ENCODE measurements at regions of chr3 and their contacts with region 1.

Region 1: DNA sequence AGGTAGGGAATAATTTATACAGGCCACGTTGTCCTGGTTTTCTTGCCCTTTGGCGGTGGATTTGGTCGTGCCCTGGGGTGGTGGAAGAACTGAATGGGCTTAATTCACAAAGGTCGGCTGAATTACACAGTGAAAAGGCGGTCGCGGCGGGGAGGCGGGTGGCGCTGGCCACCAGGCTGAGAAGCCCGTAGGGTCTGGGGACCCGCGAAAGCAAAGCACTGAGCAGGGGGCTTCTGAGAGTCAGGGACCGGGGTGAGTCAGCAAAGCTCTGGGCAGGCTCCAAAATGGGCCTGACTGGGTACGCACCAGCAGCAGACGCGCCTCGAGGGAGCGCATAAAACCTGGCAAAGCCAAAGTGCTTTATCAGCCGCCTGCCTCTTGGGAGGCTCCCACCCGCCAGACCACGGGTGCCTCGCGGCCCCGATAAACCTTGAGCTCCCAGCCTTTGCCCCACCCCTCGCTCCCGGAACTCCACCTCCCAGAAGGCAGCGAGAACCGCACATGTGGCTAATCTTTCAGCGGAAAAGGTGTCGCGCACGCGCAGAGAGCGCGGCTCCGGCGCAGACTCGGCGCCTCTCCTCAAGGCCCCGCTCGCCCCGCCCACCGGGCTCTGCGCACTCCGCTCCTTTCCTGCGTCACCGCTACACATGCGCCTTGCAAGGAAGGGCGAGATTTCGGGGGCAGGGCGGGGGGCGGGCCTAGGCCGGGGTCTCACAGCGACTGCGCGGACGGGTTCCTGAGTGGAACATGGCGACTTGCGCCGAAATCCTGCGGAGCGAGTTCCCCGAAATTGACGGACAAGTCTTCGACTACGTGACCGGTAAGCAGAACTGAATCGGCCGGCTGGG is at the start of gene ABCF3:
- DNase-seq: peak; percentile 100
- ATAC-seq: peak; percentile 95
- H3K4me3 Mint-ChIP-seq: peak within 1 kb of the TSS; percentile 99
- H3K27ac Mint-ChIP-seq: peak within 1 kb of the TSS; percentile 93
- H3K4me1 Mint-ChIP-seq: peaks cover 32% of the 10 kb centered on the region
- H3K27me3 Mint-ChIP-seq: no peaks in the 10 kb centered on the region
- total RNA-seq, gene ABCF3: 58.2 to 66.2 TPM

Region 2: GRCh38 chr3:183829331-183829865 is 356.3 kb before region 1 on chr3:
- CTCF ChIA-PET with region 1: no interaction called
- POLR2A ChIA-PET with region 1: no interaction called
- intact Hi-C with region 1: no loop called
- DNase-seq: no peak
- ATAC-seq: no peak
- H3K4me3 Mint-ChIP-seq: no peak overlapping the region
- H3K27ac Mint-ChIP-seq: no peak overlapping the region
- H3K4me1 Mint-ChIP-seq: peaks cover 4% of the 10 kb centered on the region
- H3K27me3 Mint-ChIP-seq: no peaks in the 10 kb centered on the region

Region 3: DNA sequence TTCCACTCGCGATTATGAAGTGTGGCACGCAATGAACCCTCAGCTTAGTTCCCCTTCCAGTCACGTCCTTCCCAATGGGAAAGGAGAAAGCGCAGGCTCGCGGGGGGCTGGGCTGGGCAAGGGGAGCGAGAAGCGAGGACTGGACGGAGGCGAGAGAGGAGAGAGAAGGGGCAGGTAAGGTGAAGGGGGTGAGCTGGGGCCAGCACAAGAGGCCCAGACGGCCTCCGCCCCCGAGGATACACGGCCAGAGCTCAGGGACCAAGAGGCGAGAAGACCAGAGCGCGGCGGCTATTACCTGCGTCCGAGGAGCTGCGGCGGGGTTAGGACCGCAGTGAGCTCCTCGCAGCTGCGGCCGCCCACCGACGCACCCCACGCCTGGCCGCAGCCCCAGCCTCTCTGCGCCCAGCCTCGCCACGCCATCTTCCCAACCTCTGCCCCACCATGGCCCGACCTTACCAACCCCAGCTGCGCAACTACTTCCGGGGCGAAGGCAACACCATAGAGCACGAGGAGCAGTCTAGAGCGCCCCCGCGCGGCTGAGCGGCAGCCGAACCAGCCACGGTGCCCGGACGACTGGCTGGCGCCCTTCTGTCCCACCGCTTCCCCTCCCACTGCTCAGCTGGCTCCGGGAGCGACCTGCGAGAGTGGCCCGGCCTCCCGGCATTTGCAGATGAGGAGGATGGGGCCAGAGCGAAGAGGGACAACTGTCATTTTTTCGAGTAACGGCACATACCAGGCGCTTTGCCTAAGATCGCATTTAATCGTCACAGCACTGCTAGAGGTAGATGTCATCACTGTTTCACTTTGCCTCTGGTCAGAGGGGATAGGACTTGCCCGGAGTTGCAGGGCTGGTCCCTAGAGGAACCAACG is 301.0 kb before region 1 on chr3 and contains the start of gene PARL:
- CTCF ChIA-PET with region 1: no interaction called
- POLR2A ChIA-PET with region 1: no interaction called
- intact Hi-C with region 1: loop called in 1 of 2 experiments (anchors 1 kb)
- DNase-seq: peak; percentile 98
- ATAC-seq: peak; percentile 100
- H3K4me3 Mint-ChIP-seq: peak within 1 kb of the TSS; percentile 94
- H3K27ac Mint-ChIP-seq: peak within 1 kb of the TSS; percentile 94
- H3K4me1 Mint-ChIP-seq: peaks cover 32% of the 10 kb centered on the region
- H3K27me3 Mint-ChIP-seq: no peaks in the 10 kb centered on the region
- total RNA-seq, gene PARL: 55.9 to 91.9 TPM

Region 4: DNA sequence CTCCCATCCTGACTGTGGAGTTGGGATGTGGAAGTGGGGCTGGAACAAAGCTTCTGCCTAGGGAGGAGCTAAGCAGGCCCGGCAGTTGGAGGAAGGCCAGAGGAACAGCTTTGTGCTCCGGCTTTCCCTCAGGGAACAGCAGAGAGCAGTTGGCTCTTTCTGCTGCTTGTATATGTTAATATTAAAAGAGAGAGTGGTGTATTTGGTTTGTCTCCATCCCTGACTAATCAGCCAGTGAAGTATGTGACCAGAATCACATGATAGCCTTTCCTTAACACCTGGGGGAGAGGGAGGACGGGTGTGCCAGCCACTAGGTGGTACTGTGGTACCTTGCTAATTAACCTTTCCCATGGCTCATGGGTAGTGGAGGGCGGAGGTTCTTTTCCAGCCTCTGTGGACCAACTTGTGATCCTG is 40.6 kb before region 1 on chr3:
- CTCF ChIA-PET with region 1: interaction called, 4 read pairs
- POLR2A ChIA-PET with region 1: no interaction called
- intact Hi-C with region 1: loop called in 1 of 2 experiments (anchors 1 kb)
- DNase-seq: peak; percentile 59
- ATAC-seq: peak; percentile 81
- H3K4me3 Mint-ChIP-seq: no peak overlapping the region
- H3K27ac Mint-ChIP-seq: no peak overlapping the region
- H3K4me1 Mint-ChIP-seq: no peaks in the 10 kb centered on the region
- H3K27me3 Mint-ChIP-seq: no peaks in the 10 kb centered on the region

Region 5: GRCh38 chr3:184229394-184230080 is 43.9 kb after region 1 on chr3 and contains the start of gene VWA5B2:
- CTCF ChIA-PET with region 1: interaction called, 3 read pairs
- POLR2A ChIA-PET with region 1: interaction called, 5 read pairs
- intact Hi-C with region 1: loop called in 1 of 2 experiments (anchors 1 kb)
- DNase-seq: peak; percentile 78
- ATAC-seq: peak; percentile 93
- H3K4me3 Mint-ChIP-seq: peak within 1 kb of the TSS; percentile 56
- H3K27ac Mint-ChIP-seq: no peak within 1 kb of the TSS
- H3K4me1 Mint-ChIP-seq: peaks cover 6% of the 10 kb centered on the region
- H3K27me3 Mint-ChIP-seq: peaks cover 50% of the 10 kb centered on the region
- total RNA-seq, gene VWA5B2: not detected

Region 6: DNA sequence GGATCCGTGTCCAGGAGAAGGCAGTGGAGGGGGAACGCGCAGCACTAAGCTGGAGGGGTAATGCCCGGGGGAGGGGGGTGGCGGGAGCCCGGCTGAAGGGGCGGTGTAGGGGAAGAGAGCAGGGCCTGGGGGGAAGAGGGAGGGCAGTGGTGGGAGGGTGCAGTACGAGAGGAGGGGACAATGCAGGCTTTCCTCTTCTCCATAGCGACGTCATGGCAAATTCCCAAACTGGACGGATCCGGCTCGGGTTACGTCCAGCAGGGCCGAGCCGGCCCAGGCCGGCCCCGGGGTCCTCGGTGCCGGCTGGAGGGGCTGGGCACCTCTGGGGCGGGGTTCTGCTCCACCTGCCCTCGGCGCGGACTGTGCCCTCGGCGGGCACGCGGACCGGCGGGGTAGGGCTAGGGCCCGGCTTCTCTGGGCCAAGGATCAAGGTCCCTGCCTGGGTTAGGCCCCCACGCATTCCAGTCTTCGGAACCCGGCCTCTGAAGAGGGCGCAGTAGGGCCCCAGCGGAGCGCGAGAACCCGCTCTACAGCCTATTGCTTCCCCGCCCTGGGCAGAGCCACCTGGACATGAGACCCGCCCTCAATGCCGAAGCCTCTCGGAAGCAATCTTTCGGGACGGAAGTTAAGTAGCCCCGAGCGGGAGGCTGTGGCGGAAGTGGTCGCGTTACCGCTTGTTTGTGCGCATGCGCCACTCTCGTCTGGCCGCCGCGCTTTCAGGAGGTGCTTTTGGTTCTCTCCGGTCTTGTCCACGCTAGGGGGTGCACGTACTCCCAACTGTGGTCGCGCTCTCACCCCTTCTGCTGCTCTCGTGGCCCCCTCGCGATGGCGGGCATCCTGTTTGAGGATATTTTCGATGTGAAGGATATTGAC is 177.2 kb after region 1 on chr3:
- CTCF ChIA-PET with region 1: no interaction called
- POLR2A ChIA-PET with region 1: no interaction called
- intact Hi-C with region 1: loop called in 1 of 2 experiments (anchors 1 kb)
- DNase-seq: peak; percentile 97
- ATAC-seq: peak; percentile 91
- H3K4me3 Mint-ChIP-seq: peak overlapping the region; percentile 98
- H3K27ac Mint-ChIP-seq: peak overlapping the region; percentile 98
- H3K4me1 Mint-ChIP-seq: peaks cover 30% of the 10 kb centered on the region
- H3K27me3 Mint-ChIP-seq: no peaks in the 10 kb centered on the region

Measured in activated CD4-positive, alpha-beta T cell treated with anti-CD3 and anti-CD28 coated beads for 36 hours (primary cell).